Activated naive CD4-positive, alpha-beta T cell treated with anti-CD3 and anti-CD28 coated beads for 36 hours (primary cell): ENCODE measurements at regions of chr3 and their contacts with region 1.

Region 1: GRCh38 chr3:69200384-69201068 is 78.1 kb upstream of the LMOD3 start:
- DNase-seq: peak; percentile 79
- H3K4me3 Mint-ChIP-seq: peak overlapping the region; percentile 75
- H3K27ac Mint-ChIP-seq: peak overlapping the region; percentile 96
- H3K4me1 Mint-ChIP-seq: peaks cover 68% of the 10 kb centered on the region
- H3K27me3 Mint-ChIP-seq: no peaks in the 10 kb centered on the region

Region 2: DNA sequence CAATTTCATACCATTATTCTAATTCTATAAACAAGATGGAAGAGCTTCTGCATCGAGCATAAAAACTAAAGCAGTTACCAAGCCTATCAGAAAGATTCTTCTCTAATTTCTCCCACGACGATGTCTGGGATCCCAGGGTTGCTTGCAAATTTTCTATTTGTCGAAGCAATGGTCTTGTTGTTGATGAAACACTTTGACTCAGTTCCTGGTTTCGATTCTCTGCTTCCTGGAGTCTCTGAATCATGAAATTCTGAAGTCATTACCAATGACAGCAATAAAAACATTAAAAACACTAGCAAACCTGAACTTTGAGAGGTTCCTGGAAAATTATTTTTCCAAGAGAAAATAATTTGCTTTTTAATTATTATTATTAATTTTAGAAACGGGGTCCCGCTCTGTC is 167.1 kb before region 1 on chr3:
- CTCF ChIA-PET with region 1: no interaction called
- intact Hi-C with region 1: loop called (anchors 1 kb)
- DNase-seq: peak; percentile 28
- H3K4me3 Mint-ChIP-seq: no peak overlapping the region
- H3K27ac Mint-ChIP-seq: peak overlapping the region; percentile 30
- H3K4me1 Mint-ChIP-seq: peaks cover 8% of the 10 kb centered on the region
- H3K27me3 Mint-ChIP-seq: no peaks in the 10 kb centered on the region

Region 3: DNA sequence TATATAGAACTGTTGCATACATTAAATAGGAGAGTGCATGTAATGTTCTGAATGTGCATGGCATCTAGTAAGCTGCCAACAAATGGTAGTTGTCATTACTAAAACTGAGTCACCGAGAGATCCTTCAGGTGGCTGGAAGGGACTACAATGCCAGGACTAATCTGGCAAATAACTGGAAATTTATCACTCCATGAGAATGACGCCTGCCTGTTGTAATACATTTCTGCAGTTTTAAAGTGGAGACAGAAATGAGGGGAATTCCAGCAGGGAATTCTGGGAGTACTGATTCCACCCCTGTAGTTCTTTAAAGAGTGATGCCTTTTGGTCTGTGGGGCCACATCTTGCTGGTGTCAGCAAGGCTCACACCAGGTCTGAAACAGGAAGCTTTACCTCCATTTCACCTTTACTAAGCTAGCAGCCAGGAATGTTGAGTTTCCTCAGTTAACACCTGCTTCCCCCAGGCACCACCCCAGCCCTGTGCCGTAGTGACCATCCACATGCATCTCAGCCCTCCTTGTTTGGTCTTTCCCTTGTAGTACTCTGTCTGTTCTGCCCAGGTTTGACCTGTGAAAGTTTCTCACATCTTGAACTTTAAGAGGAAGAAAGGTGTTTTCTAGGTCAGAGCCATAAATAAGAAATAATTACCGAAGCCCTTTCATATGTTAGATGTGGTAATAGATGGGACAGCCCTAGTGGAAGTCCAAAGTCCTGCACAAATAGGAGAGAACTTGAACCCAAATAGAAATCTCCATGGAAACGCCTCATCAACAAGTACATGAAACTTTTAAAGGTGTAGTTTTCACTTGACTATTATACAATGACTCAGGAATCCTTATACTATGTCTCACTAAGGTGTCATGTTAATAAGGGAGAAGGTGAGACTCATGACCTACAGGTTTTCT is 21.4 kb before region 1 on chr3:
- CTCF ChIA-PET with region 1: interaction called, 3 read pairs
- intact Hi-C with region 1: loop called (anchors 2 kb)
- DNase-seq: no peak
- H3K4me3 Mint-ChIP-seq: no peak overlapping the region
- H3K27ac Mint-ChIP-seq: no peak overlapping the region
- H3K4me1 Mint-ChIP-seq: peaks cover 23% of the 10 kb centered on the region
- H3K27me3 Mint-ChIP-seq: no peaks in the 10 kb centered on the region

Region 4: GRCh38 chr3:69250014-69250413 is 49.5 kb after region 1 on chr3:
- CTCF ChIA-PET with region 1: no interaction called
- intact Hi-C with region 1: loop called (anchors 1 kb)
- DNase-seq: peak; percentile 86
- H3K4me3 Mint-ChIP-seq: peak overlapping the region; percentile 54
- H3K27ac Mint-ChIP-seq: peak overlapping the region; percentile 7
- H3K4me1 Mint-ChIP-seq: peaks cover 13% of the 10 kb centered on the region
- H3K27me3 Mint-ChIP-seq: no peaks in the 10 kb centered on the region

Region 5: DNA sequence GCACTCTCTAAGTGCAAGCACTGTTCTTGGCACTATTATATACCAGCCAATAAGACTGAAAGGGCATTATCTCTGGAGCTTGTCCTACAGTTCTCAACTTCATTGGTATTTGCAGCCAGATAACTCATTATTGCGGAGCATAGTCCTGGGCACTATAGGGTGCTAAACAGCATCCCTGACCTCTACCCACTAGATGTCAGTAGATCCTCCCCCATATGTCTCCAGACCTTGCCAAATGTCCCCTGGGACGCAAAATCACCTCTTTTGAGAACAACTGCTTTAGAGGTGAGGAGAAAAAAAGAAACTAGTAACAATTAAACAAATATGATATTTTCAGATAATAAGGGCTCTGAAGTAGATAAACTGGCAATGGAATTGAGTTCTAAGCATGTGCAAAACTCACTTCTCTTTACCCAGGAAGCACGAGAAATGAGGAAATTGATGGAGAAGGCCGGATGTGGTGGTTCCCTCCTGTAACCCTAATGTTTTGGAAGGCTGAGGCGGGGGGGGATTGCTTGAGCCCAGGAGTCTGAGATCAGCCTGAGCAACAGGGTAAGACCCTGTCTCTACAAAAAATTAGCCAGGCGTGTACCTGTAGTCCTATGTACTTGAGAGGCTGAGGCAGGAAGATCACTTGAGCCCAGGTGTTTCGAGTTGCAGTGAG is 124.0 kb after region 1 on chr3:
- CTCF ChIA-PET with region 1: no interaction called
- intact Hi-C with region 1: loop called (anchors 1 kb)
- DNase-seq: peak; percentile 18
- H3K4me3 Mint-ChIP-seq: no peak overlapping the region
- H3K27ac Mint-ChIP-seq: no peak overlapping the region
- H3K4me1 Mint-ChIP-seq: peaks cover 43% of the 10 kb centered on the region
- H3K27me3 Mint-ChIP-seq: no peaks in the 10 kb centered on the region

Region 6: GRCh38 chr3:69499899-69500421 is 299.4 kb after region 1 on chr3:
- CTCF ChIA-PET with region 1: no interaction called
- intact Hi-C with region 1: no loop called
- DNase-seq: no peak
- H3K4me3 Mint-ChIP-seq: no peak overlapping the region
- H3K27ac Mint-ChIP-seq: no peak overlapping the region
- H3K4me1 Mint-ChIP-seq: no peaks in the 10 kb centered on the region
- H3K27me3 Mint-ChIP-seq: peaks cover 6% of the 10 kb centered on the region

Region 7: DNA sequence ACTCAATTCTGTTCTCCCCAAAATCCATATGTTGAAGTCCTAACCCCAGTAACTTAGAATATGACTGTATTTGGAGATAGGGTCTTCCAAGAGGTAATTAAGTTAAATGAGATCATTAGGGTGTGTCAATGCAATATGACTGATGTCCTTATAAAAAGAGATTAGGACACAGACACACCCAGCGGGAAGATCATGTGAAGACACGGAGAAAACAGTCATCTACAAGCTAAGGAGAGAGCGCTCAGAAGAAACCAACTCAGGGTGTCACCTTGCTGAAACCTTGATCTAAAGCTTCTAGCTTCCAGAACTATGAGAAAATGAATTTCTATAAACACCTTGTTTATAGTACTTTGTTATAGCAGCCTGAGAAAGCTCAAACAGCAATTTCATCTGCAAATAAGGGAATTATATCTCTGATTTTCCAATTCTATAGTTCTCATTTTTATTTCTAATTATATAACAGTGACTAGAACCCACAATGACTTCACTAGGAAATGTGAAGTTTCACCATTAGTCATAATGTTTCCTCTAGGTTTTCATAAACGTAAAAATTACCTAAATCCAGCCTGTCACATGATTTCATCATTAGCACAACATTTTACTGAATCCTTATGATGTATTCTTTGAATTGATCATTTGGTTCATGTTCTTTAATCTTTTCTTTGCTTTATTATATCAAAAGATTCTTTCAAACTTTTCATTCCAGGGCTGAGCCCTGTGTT is 1571.1 kb after region 1 on chr3:
- CTCF ChIA-PET with region 1: no interaction called
- intact Hi-C with region 1: loop called (anchors 5 kb)
- DNase-seq: no peak
- H3K4me3 Mint-ChIP-seq: no peak overlapping the region
- H3K27ac Mint-ChIP-seq: no peak overlapping the region
- H3K4me1 Mint-ChIP-seq: peaks cover 14% of the 10 kb centered on the region
- H3K27me3 Mint-ChIP-seq: peaks cover 25% of the 10 kb centered on the region